Endothelial cell of umbilical vein (primary cell): ENCODE measurements at regions of chr15 and their contacts with region 1.

Region 1: DNA sequence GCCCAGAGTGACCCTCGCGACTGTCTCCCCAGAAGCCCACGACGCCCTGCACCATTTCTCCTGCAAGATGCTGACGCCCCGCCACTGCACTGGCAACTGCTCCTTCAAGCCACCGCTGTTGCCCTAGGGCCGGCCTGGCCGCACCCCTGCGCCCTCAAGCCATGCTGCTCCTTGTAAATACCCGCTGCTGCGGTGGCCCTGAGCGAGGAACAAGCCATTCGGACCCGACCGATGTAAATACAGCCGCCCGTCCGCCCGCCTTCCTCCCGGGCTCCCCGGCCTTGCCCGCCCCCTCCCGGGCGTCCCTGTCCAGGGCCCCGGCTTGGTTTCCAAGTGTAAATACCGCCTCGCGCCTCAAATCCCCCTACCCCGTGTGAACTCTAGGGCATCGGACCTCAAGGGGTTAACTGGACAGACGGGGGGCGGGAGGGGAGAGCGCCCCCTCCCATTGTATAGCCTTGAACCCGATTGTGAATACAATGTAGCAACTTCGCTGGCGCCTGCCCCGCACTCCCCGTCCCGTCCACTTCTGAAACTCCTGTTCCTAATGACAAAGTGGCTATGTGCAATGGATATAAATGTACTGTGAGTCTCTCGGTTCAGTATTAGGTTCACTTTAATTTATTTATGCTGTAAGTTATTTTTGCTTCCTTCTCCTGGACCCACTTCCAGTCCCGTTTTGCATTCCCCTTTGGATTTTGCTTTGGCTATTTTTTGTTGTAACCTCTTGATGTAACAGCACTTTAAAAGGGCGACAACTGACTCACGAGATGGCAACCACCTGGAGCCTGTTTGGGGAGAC is 5.9 kb downstream of the RNU6-1 start:
- DNase-seq: peak; percentile 47
- H3K4me3 ChIP-seq: peak overlapping the region in 1 of 3 experiments; percentile 3
- H3K27ac ChIP-seq: no peak overlapping the region
- H3K4me1 ChIP-seq: peaks cover 32% of the 10 kb centered on the region
- H3K27me3 ChIP-seq: peaks cover 73 to 84% of the 10 kb centered on the region in 2 experiments
- CTCF ChIP-seq: peak; percentile 42 to 72
- POLR2A ChIP-seq: no peak

Region 2: DNA sequence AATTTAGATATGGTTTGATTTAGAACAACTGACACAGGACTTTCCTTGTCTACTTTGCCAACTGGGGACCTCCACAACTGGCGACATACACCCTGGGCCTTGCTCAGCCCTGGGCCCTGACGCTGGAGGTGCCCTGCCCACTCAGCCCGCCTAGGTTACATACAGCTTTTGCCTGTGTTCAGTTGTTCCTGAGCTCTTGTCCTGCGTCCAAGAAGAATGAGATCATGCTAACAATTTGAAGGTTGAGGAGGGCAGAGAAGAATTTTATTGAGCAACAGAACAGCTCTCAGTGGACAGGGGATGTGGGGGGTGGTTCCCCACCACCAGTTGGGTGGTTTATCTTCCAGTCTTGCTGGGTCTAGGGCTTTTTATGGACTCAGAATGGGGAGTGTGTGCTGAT is 511.4 kb before region 1 on chr15:
- CTCF ChIA-PET with region 1: no interaction called
- POLR2A ChIA-PET with region 1: no interaction called
- dilution Hi-C with region 1: no loop called
- intact Hi-C with region 1: loop called (anchors 5 kb)
- DNase-seq: no peak
- H3K4me3 ChIP-seq: no peak overlapping the region
- H3K27ac ChIP-seq: no peak overlapping the region
- H3K4me1 ChIP-seq: no peaks in the 10 kb centered on the region
- H3K27me3 ChIP-seq: peaks cover 2 to 3% of the 10 kb centered on the region in 2 experiments
- CTCF ChIP-seq: no peak
- POLR2A ChIP-seq: no peak

Region 3: GRCh38 chr15:67456677-67457529 is 377.0 kb before region 1 on chr15:
- CTCF ChIA-PET with region 1: interaction called, 111 read pairs
- POLR2A ChIA-PET with region 1: no interaction called
- dilution Hi-C with region 1: no loop called
- intact Hi-C with region 1: loop called (anchors 1 kb)
- DNase-seq: peak; percentile 70
- H3K4me3 ChIP-seq: no peak overlapping the region
- H3K27ac ChIP-seq: no peak overlapping the region
- H3K4me1 ChIP-seq: no peaks in the 10 kb centered on the region
- H3K27me3 ChIP-seq: peaks cover 7 to 13% of the 10 kb centered on the region in 2 experiments
- CTCF ChIP-seq: peak; percentile 87 to 95
- POLR2A ChIP-seq: no peak

Region 4: DNA sequence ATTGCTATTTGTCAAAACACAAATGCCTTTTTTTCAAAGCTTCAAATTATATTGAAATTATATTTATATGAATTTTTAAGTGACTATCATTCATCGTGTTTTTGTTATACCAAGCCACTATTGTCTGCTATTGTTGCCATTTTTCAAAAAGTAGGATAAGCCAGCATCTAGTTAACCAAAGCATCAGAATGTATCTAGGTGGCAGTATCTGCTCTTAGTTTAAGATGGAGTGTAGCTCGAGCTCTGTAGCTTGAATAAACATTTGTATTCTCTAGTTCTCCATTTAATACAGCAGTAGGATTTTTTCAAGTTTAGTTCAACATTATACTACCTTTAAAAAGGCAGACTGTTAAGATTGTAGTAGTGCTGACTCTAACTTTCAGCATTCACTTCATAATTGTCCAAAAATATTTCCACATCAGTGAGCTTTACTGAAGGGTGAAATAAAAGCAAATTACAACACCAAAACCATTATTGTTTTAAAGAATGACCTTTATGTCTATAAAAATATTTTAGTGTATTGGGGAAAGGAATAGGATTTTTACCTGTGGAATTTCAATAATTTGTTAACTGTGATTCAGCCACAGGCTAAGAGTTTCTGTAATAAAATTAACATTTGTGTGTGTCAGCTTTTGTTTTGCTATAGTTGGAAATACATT is 332.6 kb before region 1 on chr15:
- CTCF ChIA-PET with region 1: interaction called, 23 read pairs
- POLR2A ChIA-PET with region 1: no interaction called
- dilution Hi-C with region 1: no loop called
- intact Hi-C with region 1: loop called (anchors 1 kb)
- DNase-seq: peak; percentile 48
- H3K4me3 ChIP-seq: peak overlapping the region in 1 of 3 experiments; percentile 47
- H3K27ac ChIP-seq: no peak overlapping the region
- H3K4me1 ChIP-seq: peaks cover 7% of the 10 kb centered on the region
- H3K27me3 ChIP-seq: no peaks in the 10 kb centered on the region
- CTCF ChIP-seq: peak in 1 of 2 donors; percentile 3
- POLR2A ChIP-seq: no peak

Region 5: DNA sequence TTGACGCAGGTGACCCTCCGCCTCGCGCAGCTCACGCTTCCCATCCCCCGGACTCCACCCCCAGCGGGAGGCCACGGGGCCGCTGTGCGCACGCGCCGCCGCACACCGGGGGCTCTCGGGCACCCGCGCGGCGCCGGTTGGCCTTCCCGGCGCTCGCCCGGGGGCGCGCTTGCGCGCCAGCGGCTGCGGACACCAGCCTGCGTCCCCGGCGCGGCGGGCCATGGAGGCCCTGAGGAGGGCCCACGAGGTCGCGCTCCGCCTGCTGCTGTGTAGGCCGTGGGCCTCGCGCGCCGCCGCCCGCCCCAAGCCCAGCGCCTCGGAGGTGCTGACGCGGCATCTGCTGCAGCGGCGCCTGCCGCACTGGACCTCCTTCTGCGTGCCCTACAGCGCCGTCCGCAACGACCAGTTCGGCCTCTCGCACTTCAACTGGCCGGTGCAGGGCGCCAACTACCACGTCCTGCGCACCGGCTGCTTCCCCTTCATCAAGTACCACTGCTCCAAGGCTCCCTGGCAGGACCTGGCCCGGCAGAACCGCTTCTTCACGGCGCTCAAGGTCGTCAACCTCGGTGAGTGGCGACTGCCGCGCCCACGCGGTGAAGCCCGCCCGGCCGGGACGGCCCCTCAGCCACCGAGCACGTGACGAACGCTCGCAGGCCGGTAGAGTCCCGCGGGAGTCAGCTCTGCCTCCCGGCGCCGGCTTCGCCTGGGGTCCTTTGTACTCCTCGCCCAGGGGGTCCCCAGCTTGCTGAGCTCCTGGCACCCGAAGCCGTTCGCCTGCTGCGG is 312.7 kb before region 1 on chr15 and contains the start of gene C15orf61:
- CTCF ChIA-PET with region 1: interaction called, 8 read pairs
- POLR2A ChIA-PET with region 1: no interaction called
- dilution Hi-C with region 1: no loop called
- intact Hi-C with region 1: loop called (anchors 1 kb)
- DNase-seq: peak; percentile 84
- H3K4me3 ChIP-seq: peak within 1 kb of the TSS; percentile 77 to 95 (median 81)
- H3K27ac ChIP-seq: peak within 1 kb of the TSS; percentile 63
- H3K4me1 ChIP-seq: peaks cover 17% of the 10 kb centered on the region
- H3K27me3 ChIP-seq: no peaks in the 10 kb centered on the region
- CTCF ChIP-seq: no peak
- POLR2A ChIP-seq: peak; percentile 34
- total RNA-seq, gene C15orf61: 3.7 and 4.1 TPM in 2 replicates

Region 6: DNA sequence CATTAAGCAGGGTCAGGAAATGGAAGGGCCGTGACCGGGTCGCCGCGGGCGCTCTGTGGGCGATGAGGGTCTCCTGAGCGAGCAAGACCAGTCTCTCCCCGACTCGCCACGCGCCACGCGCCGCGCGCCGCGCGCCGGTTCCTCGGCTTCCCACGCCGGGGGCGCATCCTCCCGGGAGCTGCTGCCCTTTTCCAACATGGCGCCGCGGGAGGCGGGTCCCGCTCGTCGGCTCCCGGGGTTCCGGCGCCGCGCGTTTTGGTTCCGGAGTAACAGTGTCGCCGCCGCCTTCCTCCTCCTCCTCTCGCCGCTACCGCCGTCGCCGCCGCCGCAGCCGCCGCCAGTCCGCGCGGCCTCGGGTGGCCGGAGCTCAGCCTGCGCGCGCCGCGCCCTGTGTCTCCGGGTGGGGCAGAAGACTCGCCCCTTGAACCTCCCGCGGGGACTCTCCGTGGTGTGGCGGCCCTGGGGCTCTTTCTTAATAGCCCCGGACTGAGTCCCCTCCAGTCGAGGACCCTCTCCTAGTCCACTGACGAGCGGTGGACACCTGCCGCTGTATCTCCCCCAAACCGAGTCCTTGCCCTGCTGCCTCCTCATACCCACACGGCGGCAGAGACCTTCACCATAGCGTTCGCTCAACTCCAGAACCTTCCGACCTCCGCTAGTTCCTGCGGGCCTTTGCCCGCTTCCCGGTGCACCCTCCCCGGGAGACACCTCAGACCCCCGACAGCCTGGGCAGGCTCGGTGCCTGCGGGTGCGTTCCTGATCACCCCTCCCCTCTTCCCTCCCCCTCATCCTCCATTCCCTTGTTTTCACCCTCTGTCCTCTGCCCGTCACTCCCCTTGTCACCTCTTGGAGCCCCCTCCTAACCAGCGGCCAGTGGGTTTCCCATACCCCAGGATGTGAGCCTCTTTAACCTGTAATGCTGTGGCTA is 291.2 kb before region 1 on chr15 and contains the start of gene MAP2K5:
- CTCF ChIA-PET with region 1: no interaction called
- POLR2A ChIA-PET with region 1: no interaction called
- dilution Hi-C with region 1: no loop called
- intact Hi-C with region 1: loop called (anchors 2 kb)
- DNase-seq: peak; percentile 77
- H3K4me3 ChIP-seq: peak within 1 kb of the TSS; percentile 67 to 99 (median 96)
- H3K27ac ChIP-seq: peak within 1 kb of the TSS; percentile 65
- H3K4me1 ChIP-seq: peaks cover 8% of the 10 kb centered on the region
- H3K27me3 ChIP-seq: no peaks in the 10 kb centered on the region
- CTCF ChIP-seq: no peak
- POLR2A ChIP-seq: peak; percentile 84
- total RNA-seq, gene MAP2K5: 24.2 and 24.7 TPM in 2 replicates

Region 7: DNA sequence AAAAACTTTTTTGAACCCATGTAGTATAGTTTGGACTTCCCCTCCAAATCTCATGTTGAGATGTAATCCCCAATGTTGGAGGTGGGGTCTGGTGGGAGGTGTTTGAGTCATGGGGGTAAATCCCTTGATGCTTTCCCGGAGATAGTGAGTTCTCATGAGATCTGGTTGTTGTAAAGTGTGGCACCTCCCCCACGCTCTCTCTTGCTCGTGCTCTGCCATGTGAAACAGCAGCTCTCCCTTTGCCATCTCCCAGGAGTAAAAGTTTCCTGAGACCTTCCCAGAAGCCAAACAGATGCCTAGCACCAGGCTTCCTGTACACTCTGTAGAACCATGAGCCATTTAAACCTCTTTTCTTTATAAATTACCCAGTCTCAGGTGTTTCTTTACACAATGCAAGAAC is 21.9 kb after region 1 on chr15:
- CTCF ChIA-PET with region 1: no interaction called
- POLR2A ChIA-PET with region 1: no interaction called
- dilution Hi-C with region 1: no loop called
- intact Hi-C with region 1: no loop called
- DNase-seq: no peak
- H3K4me3 ChIP-seq: no peak overlapping the region
- H3K27ac ChIP-seq: no peak overlapping the region
- H3K4me1 ChIP-seq: no peaks in the 10 kb centered on the region
- H3K27me3 ChIP-seq: peaks cover 0 to 2% of the 10 kb centered on the region in 2 experiments
- CTCF ChIP-seq: no peak
- POLR2A ChIP-seq: no peak

Region 8: DNA sequence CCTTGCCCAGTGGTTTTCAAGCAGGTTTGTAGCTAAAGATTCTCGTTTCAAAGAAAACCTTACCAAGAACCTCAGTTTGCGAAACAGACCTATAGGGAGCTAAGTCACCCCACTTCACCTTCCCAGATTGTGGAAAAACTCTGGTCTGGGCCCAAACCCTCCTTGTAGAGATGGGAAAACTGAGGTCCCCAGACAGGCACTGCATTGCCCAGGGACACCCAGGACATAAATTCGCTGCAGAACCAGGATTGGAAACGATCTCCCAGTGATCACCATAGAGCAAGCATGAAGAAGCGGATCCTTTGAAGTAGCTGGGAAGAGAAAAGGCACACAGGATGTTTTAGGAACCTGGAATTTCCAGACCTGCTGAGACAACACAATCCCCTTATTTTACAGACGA is 134.7 kb after region 1 on chr15:
- CTCF ChIA-PET with region 1: no interaction called
- POLR2A ChIA-PET with region 1: no interaction called
- dilution Hi-C with region 1: no loop called
- intact Hi-C with region 1: no loop called
- DNase-seq: no peak
- H3K4me3 ChIP-seq: no peak overlapping the region
- H3K27ac ChIP-seq: no peak overlapping the region
- H3K4me1 ChIP-seq: peaks cover 4% of the 10 kb centered on the region
- H3K27me3 ChIP-seq: peaks cover 9 to 16% of the 10 kb centered on the region in 2 experiments
- CTCF ChIP-seq: no peak
- POLR2A ChIP-seq: no peak